Heart right ventricle (tissue), 16 donors: ENCODE measurements at regions of chr9 and their contacts with region 1.

Region 1: GRCh38 chr9:107282753-107283625 is at the start of gene RAD23B:
- DNase-seq: peak; percentile 98 to 99
- ATAC-seq: peak; percentile 96 to 99 (median 98)
- H3K4me3 ChIP-seq: peak within 1 kb of the TSS; percentile 68 to 98 (median 92)
- H3K27ac ChIP-seq: peak within 1 kb of the TSS; percentile 97 to 100 (median 99)
- H3K4me1 ChIP-seq: peaks cover 0 to 49% (median 41%) of the 10 kb centered on the region in 9 donors
- H3K27me3 ChIP-seq: no peaks in the 10 kb centered on the region
- CTCF ChIP-seq: peak in 1 of 9 donors; percentile 2
- total RNA-seq, gene RAD23B: 85.5 to 122 (median 106) TPM

Region 2: DNA sequence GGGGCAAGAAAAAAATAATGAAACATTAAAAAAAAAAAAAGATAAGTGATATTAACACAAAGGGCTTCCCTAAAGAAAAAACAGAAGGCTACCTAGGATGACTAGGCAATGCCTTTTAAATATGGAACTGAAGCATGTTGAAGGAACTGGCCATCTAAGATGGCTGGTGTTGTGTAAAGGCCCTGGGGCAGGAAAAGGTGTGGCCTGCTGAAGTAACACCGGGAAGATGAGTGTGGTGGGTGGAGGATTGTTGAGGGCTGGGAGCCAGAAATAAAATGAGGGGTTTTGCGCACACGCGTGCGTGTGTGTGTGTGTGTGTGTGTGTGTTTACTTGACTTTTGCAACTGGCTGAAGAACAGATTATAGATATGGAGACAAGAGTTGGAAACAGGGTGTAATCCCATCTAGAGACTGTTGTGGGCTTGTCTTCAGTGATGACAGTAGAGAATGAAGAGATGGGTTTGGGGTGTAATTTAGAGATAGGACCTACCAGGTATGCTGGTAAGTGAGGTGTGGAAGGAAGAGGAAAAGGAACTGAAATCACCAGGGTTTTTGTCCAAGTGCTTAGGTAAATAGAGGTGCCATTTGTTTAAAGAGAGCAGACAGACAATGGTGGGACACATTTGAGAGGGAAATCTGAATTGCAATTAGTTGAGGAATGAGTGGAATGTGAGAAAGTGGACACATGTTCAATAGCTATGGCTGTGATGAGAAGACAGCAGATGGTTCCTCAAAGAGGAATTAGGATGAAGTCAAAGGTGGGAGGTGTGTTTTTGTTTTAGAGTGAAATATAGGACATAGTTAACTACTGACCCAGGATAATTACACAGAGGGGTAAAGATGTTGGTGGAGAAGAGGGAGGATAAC is 34.0 kb after region 1 on chr9:
- intact Hi-C with region 1: loop called in 3 of 10 experiments (anchors 2 to 5 kb)
- DNase-seq: no peak
- ATAC-seq: no peak
- H3K4me3 ChIP-seq: no peak overlapping the region
- H3K27ac ChIP-seq: no peak overlapping the region
- H3K4me1 ChIP-seq: peaks cover 0 to 40% (median 18%) of the 10 kb centered on the region in 9 donors
- H3K27me3 ChIP-seq: no peaks in the 10 kb centered on the region
- CTCF ChIP-seq: no peak

Region 3: DNA sequence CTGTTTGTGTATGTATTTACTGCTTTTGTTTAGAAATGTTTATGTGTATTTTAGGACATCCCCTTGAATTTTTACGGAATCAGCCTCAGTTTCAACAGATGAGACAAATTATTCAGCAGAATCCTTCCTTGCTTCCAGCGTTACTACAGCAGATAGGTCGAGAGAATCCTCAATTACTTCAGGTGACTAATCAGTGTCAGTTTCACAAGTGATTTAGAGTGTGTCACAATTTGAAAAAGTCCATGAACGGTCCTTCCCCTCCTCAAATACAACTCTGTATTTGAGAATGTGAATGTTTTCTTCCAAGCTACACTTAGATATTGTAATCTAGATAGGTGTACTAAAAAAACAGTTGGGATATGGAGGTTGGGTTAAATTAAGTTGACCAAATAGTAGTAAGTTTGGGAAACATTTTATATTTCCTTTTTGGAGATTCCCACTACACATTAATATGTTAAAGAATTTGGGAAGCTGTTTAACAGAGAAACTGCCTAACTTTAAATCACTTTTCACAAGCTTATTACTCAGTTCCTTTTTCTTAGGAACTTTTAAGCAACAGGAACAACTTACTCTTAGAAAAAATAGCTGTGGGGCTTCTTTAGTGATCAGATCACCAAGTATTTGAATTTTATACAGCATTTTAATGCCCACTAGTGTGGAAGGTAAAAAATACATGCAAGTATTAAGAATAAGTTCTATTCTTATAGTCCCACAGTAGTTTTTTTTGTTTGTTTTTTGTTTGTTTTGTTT is 41.0 kb after region 1 on chr9:
- intact Hi-C with region 1: loop called in 2 of 10 experiments (anchors 5 kb)
- DNase-seq: no peak
- ATAC-seq: no peak
- H3K4me3 ChIP-seq: no peak overlapping the region
- H3K27ac ChIP-seq: peak overlapping the region in 1 of 10 donors; percentile 37
- H3K4me1 ChIP-seq: peaks cover 0 to 36% (median 22%) of the 10 kb centered on the region in 9 donors
- H3K27me3 ChIP-seq: no peaks in the 10 kb centered on the region
- CTCF ChIP-seq: no peak

Region 4: GRCh38 chr9:107340920-107341632 is 58.1 kb after region 1 on chr9:
- intact Hi-C with region 1: loop called in 2 of 10 experiments (anchors 5 to 10 kb)
- DNase-seq: peak; percentile 73 to 80
- ATAC-seq: peak; percentile 45 to 65 (median 58)
- H3K4me3 ChIP-seq: no peak overlapping the region
- H3K27ac ChIP-seq: no peak overlapping the region
- H3K4me1 ChIP-seq: peaks cover 0 to 40% (median 16%) of the 10 kb centered on the region in 9 donors
- H3K27me3 ChIP-seq: no peaks in the 10 kb centered on the region
- CTCF ChIP-seq: peak; percentile 83 to 93 (median 85)

Region 5: GRCh38 chr9:107389617-107390071 is 106.7 kb after region 1 on chr9:
- intact Hi-C with region 1: no loop called
- DNase-seq: peak; percentile 20 to 33
- ATAC-seq: peak; percentile 71 to 83 (median 78)
- H3K4me3 ChIP-seq: no peak overlapping the region
- H3K27ac ChIP-seq: peak overlapping the region in 8 of 10 donors; percentile 32 to 55 (median 48)
- H3K4me1 ChIP-seq: peaks cover 0 to 46% (median 20%) of the 10 kb centered on the region in 9 donors
- H3K27me3 ChIP-seq: no peaks in the 10 kb centered on the region
- CTCF ChIP-seq: no peak

Region 6: GRCh38 chr9:107432695-107433065 is 149.7 kb after region 1 on chr9:
- intact Hi-C with region 1: no loop called
- DNase-seq: no peak
- ATAC-seq: no peak
- H3K4me3 ChIP-seq: no peak overlapping the region
- H3K27ac ChIP-seq: no peak overlapping the region
- H3K4me1 ChIP-seq: no peaks in the 10 kb centered on the region
- H3K27me3 ChIP-seq: no peaks in the 10 kb centered on the region
- CTCF ChIP-seq: no peak